CD8-positive, alpha-beta T cell (primary cell): ENCODE measurements at regions of chr15 and their contacts with region 1.

Region 1: GRCh38 chr15:34456658-34457057 is 19.1 kb upstream of the GOLGA8A start:
- DNase-seq: no peak
- ATAC-seq: no peak
- H3K4me3 ChIP-seq: no peak overlapping the region
- H3K4me3 Mint-ChIP-seq: no peak overlapping the region
- H3K27ac ChIP-seq: no peak overlapping the region
- H3K27ac Mint-ChIP-seq: no peak overlapping the region
- H3K4me1 ChIP-seq: no peaks in the 10 kb centered on the region
- H3K4me1 Mint-ChIP-seq: no peaks in the 10 kb centered on the region
- H3K27me3 ChIP-seq: no peaks in the 10 kb centered on the region
- H3K27me3 Mint-ChIP-seq: peaks cover 32% of the 10 kb centered on the region
- CTCF ChIP-seq: no peak

Region 2: DNA sequence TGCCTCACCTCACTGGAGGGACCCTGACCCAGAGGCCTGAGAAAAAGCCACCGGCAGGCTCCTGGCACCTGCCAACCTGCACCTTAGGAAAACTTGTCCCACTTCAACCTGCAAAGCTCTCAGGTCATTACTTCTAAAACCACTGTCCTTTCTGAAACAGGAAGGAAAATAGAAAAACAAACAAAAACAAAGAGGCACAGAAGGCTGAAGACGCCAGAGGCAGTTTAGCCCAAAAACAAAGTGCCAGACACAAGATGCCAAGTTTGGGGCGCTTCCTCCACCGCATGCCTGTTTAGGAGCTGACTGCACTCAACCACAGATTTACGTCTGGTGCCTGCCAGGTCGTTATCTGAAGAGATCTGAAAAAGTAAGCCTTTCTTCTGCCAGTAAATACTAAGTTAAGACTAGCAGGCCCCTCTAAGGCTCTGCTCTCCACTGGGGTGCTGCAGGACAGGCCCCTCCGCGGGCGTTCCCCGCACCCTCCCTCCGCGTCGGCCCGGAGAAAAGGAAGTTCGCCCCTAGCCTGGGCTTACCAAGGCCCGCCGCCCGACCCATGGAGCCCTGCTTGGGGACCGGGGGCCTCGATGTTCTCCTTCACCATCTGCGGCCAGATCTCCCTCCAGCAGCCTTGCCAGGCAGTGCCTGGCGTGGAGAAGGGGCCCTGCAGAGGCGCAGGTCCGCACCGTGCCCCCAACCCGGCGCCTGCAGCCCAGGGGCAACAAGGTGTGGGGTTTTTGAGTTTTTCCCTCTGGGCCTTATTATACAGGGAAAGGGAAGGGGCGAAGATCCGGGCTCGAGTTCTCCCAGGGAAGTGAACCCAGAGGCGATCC is 20.3 kb before region 1 on chr15:
- CTCF ChIA-PET with region 1: no interaction called
- POLR2A ChIA-PET with region 1: no interaction called
- intact Hi-C with region 1: no loop called
- DNase-seq: peak in 5 of 9 experiments; percentile 35 to 64 (median 46)
- ATAC-seq: peak; percentile 39
- H3K4me3 ChIP-seq: peak overlapping the region; percentile 47 to 73
- H3K4me3 Mint-ChIP-seq: peak overlapping the region; percentile 86
- H3K27ac ChIP-seq: peak overlapping the region in 1 of 2 experiments; percentile 27
- H3K27ac Mint-ChIP-seq: peak overlapping the region; percentile 76
- H3K4me1 ChIP-seq: peaks cover 11% of the 10 kb centered on the region
- H3K4me1 Mint-ChIP-seq: peaks cover 24% of the 10 kb centered on the region
- H3K27me3 ChIP-seq: no peaks in the 10 kb centered on the region
- H3K27me3 Mint-ChIP-seq: no peaks in the 10 kb centered on the region
- CTCF ChIP-seq: no peak

Region 3: DNA sequence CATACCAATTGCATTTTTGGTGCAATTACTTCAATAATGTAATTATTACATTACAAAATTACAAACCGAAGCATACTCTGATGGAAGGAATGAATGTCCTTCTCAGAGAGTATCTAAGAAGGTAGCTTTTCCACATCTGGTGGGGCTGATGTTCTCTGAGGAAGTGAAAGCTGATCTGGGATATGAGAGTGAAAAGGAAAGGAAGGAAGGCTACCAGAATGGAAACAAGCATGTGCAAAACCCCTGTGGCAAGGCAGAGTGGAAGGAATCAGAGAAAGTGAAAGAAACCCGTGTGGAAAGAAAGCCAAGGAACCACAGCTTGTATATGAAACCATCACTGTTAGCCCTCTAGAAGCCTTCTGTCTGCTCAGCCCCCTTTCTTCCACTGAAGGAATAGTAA is 16.3 kb after region 1 on chr15:
- CTCF ChIA-PET with region 1: no interaction called
- POLR2A ChIA-PET with region 1: no interaction called
- intact Hi-C with region 1: loop called in 1 of 2 experiments (anchors 2 kb)
- DNase-seq: no peak
- ATAC-seq: no peak
- H3K4me3 ChIP-seq: no peak overlapping the region
- H3K4me3 Mint-ChIP-seq: no peak overlapping the region
- H3K27ac ChIP-seq: no peak overlapping the region
- H3K27ac Mint-ChIP-seq: no peak overlapping the region
- H3K4me1 ChIP-seq: no peaks in the 10 kb centered on the region
- H3K4me1 Mint-ChIP-seq: no peaks in the 10 kb centered on the region
- H3K27me3 ChIP-seq: no peaks in the 10 kb centered on the region
- H3K27me3 Mint-ChIP-seq: peaks cover 22% of the 10 kb centered on the region
- CTCF ChIP-seq: no peak

Region 4: DNA sequence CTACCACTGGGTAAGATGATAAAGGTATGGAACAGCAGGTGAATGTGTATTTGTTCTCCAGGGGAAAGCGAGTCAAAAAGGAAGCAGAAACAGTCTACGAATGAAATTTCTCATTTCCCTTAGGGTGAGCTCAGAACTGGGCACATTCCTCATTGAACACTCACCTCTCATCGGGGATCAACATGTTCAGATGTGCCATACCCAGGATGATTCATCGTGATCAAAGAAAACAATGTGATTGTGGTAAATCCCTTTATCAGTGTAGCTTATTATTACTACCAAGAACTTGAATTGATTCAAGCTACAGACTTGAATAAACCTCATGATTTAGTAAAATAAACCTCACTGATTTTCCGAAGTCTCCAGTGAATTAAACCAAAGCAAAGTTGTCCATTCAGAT is 226.0 kb after region 1 on chr15:
- CTCF ChIA-PET with region 1: no interaction called
- POLR2A ChIA-PET with region 1: no interaction called
- intact Hi-C with region 1: no loop called
- DNase-seq: no peak
- ATAC-seq: no peak
- H3K4me3 ChIP-seq: no peak overlapping the region
- H3K4me3 Mint-ChIP-seq: no peak overlapping the region
- H3K27ac ChIP-seq: no peak overlapping the region
- H3K27ac Mint-ChIP-seq: no peak overlapping the region
- H3K4me1 ChIP-seq: no peaks in the 10 kb centered on the region
- H3K4me1 Mint-ChIP-seq: no peaks in the 10 kb centered on the region
- H3K27me3 ChIP-seq: peaks cover 0 to 3% of the 10 kb centered on the region in 2 experiments
- H3K27me3 Mint-ChIP-seq: peaks cover 18% of the 10 kb centered on the region
- CTCF ChIP-seq: no peak